ENCODE measurements at regions of chr7 and their contacts with region 1.

Region 1: GRCh38 chr7:38451840-38452239 is 178.4 kb upstream of the TARP start:
- DNase-seq: no peak
- ATAC-seq: peak in 5 of 8 donors; percentile 51 to 81 (median 68)
- H3K4me3 ChIP-seq: no peak overlapping the region
- H3K27ac ChIP-seq: no peak overlapping the region
- H3K4me1 ChIP-seq: peaks cover 0 to 19% (median 9%) of the 10 kb centered on the region in 9 donors
- H3K27me3 ChIP-seq: no peaks in the 10 kb centered on the region
- CTCF ChIP-seq: peak in 7 of 9 donors; percentile 9 to 55 (median 44)

Region 2: GRCh38 chr7:38607466-38607865 is 155.6 kb after region 1 on chr7:
- intact Hi-C with region 1: no loop called
- DNase-seq: no peak
- ATAC-seq: no peak
- H3K4me3 ChIP-seq: no peak overlapping the region
- H3K27ac ChIP-seq: no peak overlapping the region
- H3K4me1 ChIP-seq: no peaks in the 10 kb centered on the region
- H3K27me3 ChIP-seq: no peaks in the 10 kb centered on the region
- CTCF ChIP-seq: no peak

Region 3: GRCh38 chr7:38660427-38661099 is 208.7 kb after region 1 on chr7:
- intact Hi-C with region 1: loop called in 5 of 10 experiments (anchors 2 to 10 kb)
- DNase-seq: no peak
- ATAC-seq: peak in 4 of 8 donors; percentile 35 to 51 (median 46)
- H3K4me3 ChIP-seq: no peak overlapping the region
- H3K27ac ChIP-seq: no peak overlapping the region
- H3K4me1 ChIP-seq: peaks cover 0 to 32% (median 0%) of the 10 kb centered on the region in 9 donors
- H3K27me3 ChIP-seq: peaks cover 0 to 5% (median 0%) of the 10 kb centered on the region in 7 donors
- CTCF ChIP-seq: peak in 8 of 9 donors; percentile 41 to 76 (median 58)

Region 4: GRCh38 chr7:38748056-38748611 is 296.3 kb after region 1 on chr7:
- intact Hi-C with region 1: loop called in 3 of 10 experiments (anchors 2 to 5 kb)
- DNase-seq: no peak
- ATAC-seq: no peak
- H3K4me3 ChIP-seq: no peak overlapping the region
- H3K27ac ChIP-seq: no peak overlapping the region
- H3K4me1 ChIP-seq: no peaks in the 10 kb centered on the region
- H3K27me3 ChIP-seq: no peaks in the 10 kb centered on the region
- CTCF ChIP-seq: peak in 7 of 9 donors; percentile 25 to 56 (median 40)

Measured in heart right ventricle (tissue), 16 donors.